Activated naive CD4-positive, alpha-beta T cell treated with anti-CD3 and anti-CD28 coated beads for 36 hours (primary cell): ENCODE measurements at regions of chr10 and their contacts with region 1.

Region 1: GRCh38 chr10:119725828-119726675 is at the start of gene INPP5F:
- DNase-seq: peak; percentile 100
- H3K4me3 Mint-ChIP-seq: peak within 1 kb of the TSS; percentile 88
- H3K27ac Mint-ChIP-seq: peak within 1 kb of the TSS; percentile 78
- H3K4me1 Mint-ChIP-seq: peaks cover 41% of the 10 kb centered on the region
- H3K27me3 Mint-ChIP-seq: no peaks in the 10 kb centered on the region
- total RNA-seq, gene INPP5F: 10.5 to 10.9 TPM

Region 2: DNA sequence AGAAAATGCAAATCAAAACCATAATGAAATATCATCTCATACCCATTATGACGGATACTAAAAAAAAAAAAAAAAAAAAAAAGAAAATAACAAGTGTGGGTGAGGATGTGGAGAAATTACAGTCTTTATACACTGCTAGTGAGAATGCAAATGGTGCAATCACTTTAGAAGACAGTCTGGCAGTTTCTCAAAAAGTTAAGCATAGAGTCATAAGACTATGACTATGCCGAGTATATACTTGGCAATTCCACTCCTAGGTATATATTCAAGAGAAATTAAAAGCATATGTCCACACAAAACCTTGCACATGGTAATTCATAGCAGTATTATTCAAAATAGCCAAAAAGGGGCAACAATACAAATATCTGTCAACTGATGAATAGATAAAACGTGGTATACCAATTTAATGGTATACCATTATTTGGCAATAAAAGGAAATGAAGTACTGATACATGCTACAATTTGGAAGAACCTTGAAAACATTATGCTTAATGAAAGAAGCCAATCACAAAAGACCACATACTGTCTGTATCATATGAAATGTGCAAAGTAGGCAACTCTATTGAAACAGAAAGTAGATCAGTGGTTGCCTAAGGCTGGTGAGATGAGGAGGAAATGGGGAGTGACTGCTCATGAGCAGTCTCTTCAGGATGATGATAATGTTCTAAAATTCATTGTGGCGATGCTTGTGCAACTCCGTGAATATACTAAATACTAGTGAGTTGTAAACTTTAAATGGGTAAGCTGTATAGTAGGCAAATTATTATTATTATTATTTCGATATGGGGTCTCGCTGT is 786.6 kb before region 1 on chr10:
- CTCF ChIA-PET with region 1: no interaction called
- intact Hi-C with region 1: no loop called
- DNase-seq: no peak
- H3K4me3 Mint-ChIP-seq: no peak overlapping the region
- H3K27ac Mint-ChIP-seq: no peak overlapping the region
- H3K4me1 Mint-ChIP-seq: no peaks in the 10 kb centered on the region
- H3K27me3 Mint-ChIP-seq: peaks cover 16% of the 10 kb centered on the region

Region 3: DNA sequence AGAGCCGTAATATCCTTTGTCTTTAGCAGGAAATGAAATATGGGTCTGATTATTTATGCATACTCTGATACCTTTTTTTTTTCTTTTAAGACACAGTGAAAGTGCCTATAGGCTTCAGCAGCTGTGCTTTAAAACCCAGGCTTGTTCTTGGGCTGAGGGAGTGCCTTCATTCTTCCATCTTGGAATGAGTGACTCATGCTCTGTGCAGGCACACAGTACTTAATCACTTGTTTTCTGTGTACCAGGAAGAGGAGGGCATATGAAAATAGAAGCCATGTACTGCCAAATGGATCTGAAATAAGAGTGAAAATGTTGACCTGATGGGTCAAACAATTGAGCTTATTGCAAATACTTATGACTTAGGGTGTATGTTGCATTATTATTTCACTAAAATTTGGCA is 11.8 kb after region 1 on chr10:
- CTCF ChIA-PET with region 1: interaction called, 6 read pairs
- intact Hi-C with region 1: loop called (anchors 1 kb)
- DNase-seq: peak; percentile 39
- H3K4me3 Mint-ChIP-seq: no peak overlapping the region
- H3K27ac Mint-ChIP-seq: peak overlapping the region; percentile 59
- H3K4me1 Mint-ChIP-seq: peaks cover 50% of the 10 kb centered on the region
- H3K27me3 Mint-ChIP-seq: no peaks in the 10 kb centered on the region

Region 4: GRCh38 chr10:119784340-119785070 is 58.5 kb after region 1 on chr10:
- CTCF ChIA-PET with region 1: no interaction called
- intact Hi-C with region 1: loop called (anchors 2 kb)
- DNase-seq: peak; percentile 22
- H3K4me3 Mint-ChIP-seq: peak overlapping the region; percentile 8
- H3K27ac Mint-ChIP-seq: no peak overlapping the region
- H3K4me1 Mint-ChIP-seq: peaks cover 19% of the 10 kb centered on the region
- H3K27me3 Mint-ChIP-seq: no peaks in the 10 kb centered on the region

Region 5: DNA sequence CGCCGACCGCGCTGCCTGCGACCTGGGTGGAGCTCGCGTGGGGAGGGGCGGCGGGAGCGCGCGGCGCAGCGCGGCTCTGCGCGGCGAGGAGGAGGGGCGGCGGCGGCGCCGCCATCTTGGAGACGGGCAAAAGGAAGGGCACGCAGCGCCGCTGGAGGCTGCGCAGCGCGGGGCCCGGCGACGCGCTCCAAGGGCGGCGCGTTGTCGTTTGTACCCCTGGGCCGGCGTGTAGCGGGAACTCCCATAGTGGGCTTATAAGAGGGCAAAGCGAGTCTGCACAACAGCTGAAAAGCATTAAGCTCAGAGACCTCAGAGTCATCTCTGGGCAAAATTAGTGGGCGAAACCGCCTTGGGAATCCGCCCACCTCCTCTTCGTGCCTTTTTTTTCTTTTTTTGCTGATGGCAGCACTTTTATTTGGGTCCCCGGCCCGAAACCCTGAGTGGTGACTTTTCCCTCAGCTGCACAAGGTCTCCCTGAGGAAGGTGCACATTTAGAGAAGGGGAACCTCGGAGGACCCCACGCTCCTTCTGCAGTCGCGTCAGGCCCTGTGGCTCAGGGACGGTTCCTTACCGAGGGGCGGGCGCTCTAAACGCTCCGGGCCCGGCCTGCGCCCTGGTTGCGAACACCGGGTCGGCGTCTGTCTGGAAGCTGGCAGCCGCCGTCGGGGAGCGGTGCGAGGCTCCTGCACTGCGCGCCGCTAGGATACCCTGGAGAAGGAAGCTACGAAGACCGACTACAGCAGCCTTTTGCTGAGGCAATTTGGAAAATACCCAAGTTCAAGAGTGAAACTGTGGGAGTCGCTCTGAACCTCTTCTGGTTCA is 147.0 kb after region 1 on chr10:
- CTCF ChIA-PET with region 1: interaction called, 3 read pairs
- intact Hi-C with region 1: loop called (anchors 1 kb)
- DNase-seq: peak; percentile 84
- H3K4me3 Mint-ChIP-seq: peak overlapping the region; percentile 83
- H3K27ac Mint-ChIP-seq: peak overlapping the region; percentile 84
- H3K4me1 Mint-ChIP-seq: peaks cover 38% of the 10 kb centered on the region
- H3K27me3 Mint-ChIP-seq: no peaks in the 10 kb centered on the region

Region 6: DNA sequence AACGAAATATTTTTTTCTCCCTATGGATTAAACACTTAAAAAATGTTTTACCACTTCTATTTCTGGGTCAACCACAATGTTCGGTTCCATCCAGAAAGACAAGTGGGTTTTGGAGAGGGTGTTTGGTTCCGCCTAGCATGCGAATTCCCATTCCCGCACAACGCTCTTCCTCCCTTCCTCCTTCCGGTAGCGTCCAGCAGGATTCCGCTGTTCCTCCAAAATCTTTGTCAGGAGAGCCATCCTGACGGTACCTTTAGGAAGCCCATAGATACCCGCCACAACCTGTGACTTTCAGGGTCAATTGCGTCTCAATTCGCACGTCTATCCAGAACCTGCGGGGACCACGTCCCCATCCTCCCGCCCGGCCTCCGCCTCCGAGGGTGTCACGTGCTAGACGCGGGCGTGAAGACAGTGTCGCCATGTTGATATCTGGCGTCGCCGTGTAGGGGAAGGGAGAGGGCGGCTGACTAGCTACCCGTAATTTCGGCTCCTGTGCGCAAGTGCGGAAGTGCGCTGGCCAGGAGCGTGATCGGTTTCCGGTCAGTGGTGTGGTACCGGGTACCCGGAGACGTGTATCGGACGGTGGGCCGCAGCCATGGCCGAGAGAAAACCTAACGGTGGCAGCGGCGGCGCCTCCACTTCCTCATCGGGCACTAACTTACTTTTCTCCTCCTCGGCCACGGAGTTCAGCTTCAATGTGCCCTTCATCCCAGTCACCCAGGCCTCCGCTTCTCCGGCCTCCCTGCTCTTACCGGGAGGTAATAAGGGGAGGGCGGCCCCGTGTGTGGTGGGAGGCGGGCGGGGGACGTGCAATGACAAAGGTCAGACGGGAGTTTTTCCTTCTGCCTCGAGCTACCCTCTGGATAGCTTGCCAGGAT is 166.4 kb after region 1 on chr10 and contains the start of gene SEC23IP:
- CTCF ChIA-PET with region 1: interaction called, 6 read pairs
- intact Hi-C with region 1: loop called (anchors 1 kb)
- DNase-seq: peak; percentile 95
- H3K4me3 Mint-ChIP-seq: peak within 1 kb of the TSS; percentile 95
- H3K27ac Mint-ChIP-seq: peak within 1 kb of the TSS; percentile 92
- H3K4me1 Mint-ChIP-seq: peaks cover 49% of the 10 kb centered on the region
- H3K27me3 Mint-ChIP-seq: no peaks in the 10 kb centered on the region
- total RNA-seq, gene SEC23IP: 49.0 to 55.2 TPM

Region 7: GRCh38 chr10:120039046-120039445 is 313.0 kb after region 1 on chr10:
- CTCF ChIA-PET with region 1: no interaction called
- intact Hi-C with region 1: no loop called
- DNase-seq: no peak
- H3K4me3 Mint-ChIP-seq: no peak overlapping the region
- H3K27ac Mint-ChIP-seq: no peak overlapping the region
- H3K4me1 Mint-ChIP-seq: no peaks in the 10 kb centered on the region
- H3K27me3 Mint-ChIP-seq: peaks cover 2% of the 10 kb centered on the region

Region 8: GRCh38 chr10:120671491-120671890 is 945.4 kb after region 1 on chr10:
- CTCF ChIA-PET with region 1: no interaction called
- intact Hi-C with region 1: no loop called
- DNase-seq: no peak
- H3K4me3 Mint-ChIP-seq: no peak overlapping the region
- H3K27ac Mint-ChIP-seq: no peak overlapping the region
- H3K4me1 Mint-ChIP-seq: no peaks in the 10 kb centered on the region
- H3K27me3 Mint-ChIP-seq: no peaks in the 10 kb centered on the region